CD4-positive, alpha-beta T cell (primary cell): ENCODE measurements at regions of chr12 and their contacts with region 1.

Region 1: GRCh38 chr12:25377469-25378177 is 126.9 kb upstream of the KRAS start:
- DNase-seq: peak in 12 of 14 experiments; percentile 6 to 79 (median 29)
- ATAC-seq: peak; percentile 92
- H3K4me3 ChIP-seq: no peak overlapping the region
- H3K4me3 Mint-ChIP-seq: peak overlapping the region; percentile 63
- H3K27ac ChIP-seq: peak overlapping the region; percentile 26 to 65
- H3K27ac Mint-ChIP-seq: peak overlapping the region; percentile 89
- H3K4me1 ChIP-seq: peaks cover 30% of the 10 kb centered on the region
- H3K4me1 Mint-ChIP-seq: peaks cover 47% of the 10 kb centered on the region
- H3K27me3 ChIP-seq: no peaks in the 10 kb centered on the region
- H3K27me3 Mint-ChIP-seq: no peaks in the 10 kb centered on the region
- CTCF ChIP-seq: no peak

Region 2: DNA sequence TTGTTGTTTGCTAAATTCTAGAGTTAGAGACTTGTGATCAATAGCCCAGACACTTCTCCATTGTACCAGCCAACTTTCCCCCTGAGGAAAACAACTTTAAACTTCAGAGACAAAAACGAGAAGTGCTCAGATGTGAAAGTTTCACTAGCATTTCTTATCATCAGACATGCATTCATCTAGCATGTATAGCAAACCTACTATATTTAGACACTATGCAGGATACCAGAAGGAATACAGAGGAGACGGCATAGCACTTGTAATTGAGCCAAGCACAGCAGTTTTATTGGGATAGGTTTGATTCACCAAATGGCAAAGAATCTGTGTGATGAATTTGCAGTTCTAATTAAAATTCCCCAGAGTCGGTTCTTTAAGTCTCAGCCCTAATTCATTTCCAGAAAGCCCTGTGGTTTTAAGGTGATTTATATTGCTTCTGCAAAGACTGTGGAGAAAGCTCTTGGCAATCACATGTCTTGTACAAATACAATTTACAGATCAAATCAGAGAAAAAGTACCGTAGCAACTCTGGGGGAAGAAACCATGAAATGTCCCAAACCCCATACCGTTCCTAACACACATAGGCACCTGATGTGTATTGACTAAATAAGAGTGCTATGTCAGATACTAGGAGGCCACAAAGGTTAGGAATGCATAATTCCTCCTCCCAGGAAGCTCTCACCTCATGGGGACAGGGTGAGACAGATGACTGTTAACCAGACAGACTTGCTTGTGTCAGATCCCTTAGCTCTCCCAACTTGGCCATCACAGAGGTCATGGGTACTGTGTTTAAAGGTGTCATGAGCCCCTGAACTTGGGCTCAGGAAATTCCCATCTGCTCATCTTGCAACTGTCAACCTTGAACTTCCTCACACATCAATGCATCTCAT is 57.3 kb before region 1 on chr12:
- CTCF ChIA-PET with region 1: interaction called, 3 read pairs
- POLR2A ChIA-PET with region 1: interaction called, 15 read pairs
- intact Hi-C with region 1: no loop called
- DNase-seq: no peak
- ATAC-seq: no peak
- H3K4me3 ChIP-seq: no peak overlapping the region
- H3K4me3 Mint-ChIP-seq: no peak overlapping the region
- H3K27ac ChIP-seq: no peak overlapping the region
- H3K27ac Mint-ChIP-seq: no peak overlapping the region
- H3K4me1 ChIP-seq: peaks cover 25% of the 10 kb centered on the region
- H3K4me1 Mint-ChIP-seq: peaks cover 48% of the 10 kb centered on the region
- H3K27me3 ChIP-seq: no peaks in the 10 kb centered on the region
- H3K27me3 Mint-ChIP-seq: no peaks in the 10 kb centered on the region
- CTCF ChIP-seq: no peak

Region 3: GRCh38 chr12:25337916-25338315 is 39.7 kb before region 1 on chr12:
- CTCF ChIA-PET with region 1: interaction called, 3 read pairs
- POLR2A ChIA-PET with region 1: no interaction called
- intact Hi-C with region 1: loop called in 1 of 2 experiments (anchors 5 kb)
- DNase-seq: no peak
- ATAC-seq: no peak
- H3K4me3 ChIP-seq: no peak overlapping the region
- H3K4me3 Mint-ChIP-seq: no peak overlapping the region
- H3K27ac ChIP-seq: no peak overlapping the region
- H3K27ac Mint-ChIP-seq: no peak overlapping the region
- H3K4me1 ChIP-seq: peaks cover 4% of the 10 kb centered on the region
- H3K4me1 Mint-ChIP-seq: no peaks in the 10 kb centered on the region
- H3K27me3 ChIP-seq: no peaks in the 10 kb centered on the region
- H3K27me3 Mint-ChIP-seq: no peaks in the 10 kb centered on the region
- CTCF ChIP-seq: no peak

Region 4: DNA sequence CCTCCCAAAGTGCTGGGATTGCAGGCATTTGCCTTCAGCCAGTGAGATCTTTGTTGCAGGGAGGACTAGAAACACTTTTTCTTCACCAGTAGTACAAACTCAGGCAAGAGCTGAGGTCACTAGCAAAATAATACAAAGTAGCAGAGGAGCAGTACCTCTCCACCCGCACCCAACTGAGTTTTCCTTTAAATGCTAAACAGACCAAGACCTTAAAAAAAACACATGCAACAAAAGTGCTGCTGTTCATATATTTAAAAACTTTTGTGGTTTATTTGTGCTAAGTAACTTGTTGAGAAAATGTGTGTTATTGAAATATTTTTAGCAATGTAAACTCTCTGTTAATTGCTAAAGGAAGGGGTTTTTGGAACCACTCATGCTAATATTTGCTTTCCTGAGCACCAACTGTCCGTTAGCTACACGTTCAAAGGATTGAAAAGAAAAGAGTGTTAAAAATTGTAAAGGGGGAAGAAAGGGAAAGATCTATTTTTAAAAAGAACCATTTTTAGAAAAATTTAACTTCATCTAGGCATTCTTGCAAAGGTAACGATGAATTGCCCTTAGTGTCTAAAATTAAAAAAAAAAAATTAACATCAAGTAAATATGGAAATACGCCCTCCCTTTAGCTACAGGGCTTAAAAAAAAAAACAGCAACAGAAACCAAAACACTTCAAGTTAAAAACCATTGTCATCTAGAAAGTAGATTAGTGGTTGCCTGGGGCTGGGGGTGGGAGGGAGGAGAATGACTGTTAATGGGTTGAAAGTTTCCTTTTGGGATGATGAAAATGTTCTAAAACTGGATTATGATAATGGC is 12.9 kb before region 1 on chr12:
- CTCF ChIA-PET with region 1: interaction called, 3 read pairs
- POLR2A ChIA-PET with region 1: interaction called, 18 read pairs
- intact Hi-C with region 1: no loop called
- DNase-seq: peak in 1 of 14 experiments; percentile 32
- ATAC-seq: peak; percentile 61
- H3K4me3 ChIP-seq: no peak overlapping the region
- H3K4me3 Mint-ChIP-seq: peak overlapping the region; percentile 22
- H3K27ac ChIP-seq: no peak overlapping the region
- H3K27ac Mint-ChIP-seq: no peak overlapping the region
- H3K4me1 ChIP-seq: no peaks in the 10 kb centered on the region
- H3K4me1 Mint-ChIP-seq: peaks cover 19% of the 10 kb centered on the region
- H3K27me3 ChIP-seq: no peaks in the 10 kb centered on the region
- H3K27me3 Mint-ChIP-seq: no peaks in the 10 kb centered on the region
- CTCF ChIP-seq: no peak